Mammary epithelial cell (primary cell): ENCODE measurements at regions of chr5 and their contacts with region 1.

Region 1: GRCh38 chr5:74919487-74919886 is 53.3 kb upstream of the FAM169A start:
- DNase-seq: peak; percentile 45
- H3K4me3 ChIP-seq: no peak overlapping the region
- H3K27ac ChIP-seq: no peak overlapping the region
- H3K4me1 ChIP-seq: peaks cover 5% of the 10 kb centered on the region
- H3K27me3 ChIP-seq: no peaks in the 10 kb centered on the region
- CTCF ChIP-seq: peak; percentile 43 to 57

Region 2: GRCh38 chr5:74673011-74673790 is 246.3 kb before region 1 on chr5:
- CTCF ChIA-PET with region 1: no interaction called
- dilution Hi-C with region 1: no loop called
- in situ Hi-C with region 1: loop called (anchors 5 kb)
- intact Hi-C with region 1: loop called (anchors 1 kb)
- DNase-seq: no peak
- H3K4me3 ChIP-seq: no peak overlapping the region
- H3K27ac ChIP-seq: no peak overlapping the region
- H3K4me1 ChIP-seq: peaks cover 7% of the 10 kb centered on the region
- H3K27me3 ChIP-seq: no peaks in the 10 kb centered on the region
- CTCF ChIP-seq: peak in 1 of 2 donors; percentile 57

Region 3: DNA sequence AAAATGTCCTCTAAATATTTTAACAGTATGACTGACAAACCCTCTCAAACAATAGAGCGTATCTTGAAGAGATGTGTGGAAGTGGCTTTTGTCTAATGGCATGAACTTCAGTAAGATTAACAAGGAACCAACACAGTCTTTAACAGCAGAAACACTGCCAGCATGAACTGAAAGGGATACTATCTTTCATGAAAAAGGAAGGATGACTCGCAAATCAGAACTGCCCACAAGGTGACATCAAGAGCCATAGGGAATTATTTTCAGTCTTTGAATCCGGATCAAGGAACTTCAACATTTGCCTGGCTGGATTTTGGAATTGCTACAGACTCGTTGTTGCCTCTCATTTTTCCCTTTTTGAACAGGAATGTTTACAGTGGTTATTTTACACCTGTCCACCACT is 239.5 kb before region 1 on chr5:
- CTCF ChIA-PET with region 1: no interaction called
- dilution Hi-C with region 1: no loop called
- in situ Hi-C with region 1: loop called in 1 of 2 experiments (anchors 5 kb)
- intact Hi-C with region 1: no loop called
- DNase-seq: no peak
- H3K4me3 ChIP-seq: no peak overlapping the region
- H3K27ac ChIP-seq: no peak overlapping the region
- H3K4me1 ChIP-seq: no peaks in the 10 kb centered on the region
- H3K27me3 ChIP-seq: no peaks in the 10 kb centered on the region
- CTCF ChIP-seq: no peak

Region 4: DNA sequence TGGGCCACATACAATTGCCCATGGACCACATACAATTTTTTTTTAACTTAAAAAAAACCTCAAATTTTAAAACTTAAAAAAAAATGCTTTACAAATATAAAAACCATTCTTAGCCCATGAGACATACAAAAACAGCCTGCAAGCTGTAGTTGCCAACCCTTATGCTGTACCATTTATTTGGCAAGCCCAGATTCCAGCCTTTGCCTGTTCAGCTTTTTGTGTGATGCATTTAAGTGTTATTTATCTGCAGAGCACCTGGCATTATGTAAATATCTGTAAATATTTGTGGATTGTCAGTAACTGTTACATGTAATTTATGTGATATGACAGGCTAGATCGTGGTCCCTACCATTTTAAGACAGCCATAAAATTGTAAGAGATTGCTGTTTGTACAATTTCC is 201.9 kb before region 1 on chr5:
- CTCF ChIA-PET with region 1: no interaction called
- dilution Hi-C with region 1: no loop called
- in situ Hi-C with region 1: no loop called
- intact Hi-C with region 1: loop called (anchors 2 kb)
- DNase-seq: no peak
- H3K4me3 ChIP-seq: no peak overlapping the region
- H3K27ac ChIP-seq: no peak overlapping the region
- H3K4me1 ChIP-seq: no peaks in the 10 kb centered on the region
- H3K27me3 ChIP-seq: no peaks in the 10 kb centered on the region
- CTCF ChIP-seq: no peak